ENCODE measurements at regions of chr17 and their contacts with region 1.

Region 1: GRCh38 chr17:40349920-40350909 is 14.3 kb downstream of the GJD3 start:
- DNase-seq: no peak
- H3K4me3 ChIP-seq: no peak overlapping the region
- H3K27ac ChIP-seq: no peak overlapping the region
- H3K4me1 ChIP-seq: peaks cover 0 to 60% (median 53%) of the 10 kb centered on the region in 4 donors
- H3K27me3 ChIP-seq: no peaks in the 10 kb centered on the region
- CTCF ChIP-seq: no peak

Region 2: DNA sequence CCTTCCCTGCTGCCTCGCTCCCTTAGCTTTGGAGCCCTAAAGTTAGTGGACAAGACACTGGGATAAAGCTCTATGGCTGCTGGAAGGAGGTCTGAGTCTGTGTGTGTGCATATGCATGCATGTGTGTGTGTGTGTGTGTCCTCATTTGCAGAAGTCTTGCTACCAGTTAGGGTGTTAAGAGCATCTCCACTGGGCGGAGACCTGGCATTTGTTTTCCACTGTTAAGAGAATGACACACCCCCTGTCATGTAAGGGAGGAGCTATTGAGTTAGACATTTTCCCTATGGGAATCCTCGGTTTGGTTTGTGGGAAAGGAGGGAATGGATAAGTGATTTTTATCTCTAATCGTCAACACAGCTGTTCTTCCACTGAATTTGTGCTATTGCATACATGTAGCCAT is 1946.7 kb before region 1 on chr17:
- intact Hi-C with region 1: no loop called
- DNase-seq: no peak
- H3K4me3 ChIP-seq: no peak overlapping the region
- H3K27ac ChIP-seq: no peak overlapping the region
- H3K4me1 ChIP-seq: no peaks in the 10 kb centered on the region
- H3K27me3 ChIP-seq: no peaks in the 10 kb centered on the region
- CTCF ChIP-seq: no peak

Region 3: DNA sequence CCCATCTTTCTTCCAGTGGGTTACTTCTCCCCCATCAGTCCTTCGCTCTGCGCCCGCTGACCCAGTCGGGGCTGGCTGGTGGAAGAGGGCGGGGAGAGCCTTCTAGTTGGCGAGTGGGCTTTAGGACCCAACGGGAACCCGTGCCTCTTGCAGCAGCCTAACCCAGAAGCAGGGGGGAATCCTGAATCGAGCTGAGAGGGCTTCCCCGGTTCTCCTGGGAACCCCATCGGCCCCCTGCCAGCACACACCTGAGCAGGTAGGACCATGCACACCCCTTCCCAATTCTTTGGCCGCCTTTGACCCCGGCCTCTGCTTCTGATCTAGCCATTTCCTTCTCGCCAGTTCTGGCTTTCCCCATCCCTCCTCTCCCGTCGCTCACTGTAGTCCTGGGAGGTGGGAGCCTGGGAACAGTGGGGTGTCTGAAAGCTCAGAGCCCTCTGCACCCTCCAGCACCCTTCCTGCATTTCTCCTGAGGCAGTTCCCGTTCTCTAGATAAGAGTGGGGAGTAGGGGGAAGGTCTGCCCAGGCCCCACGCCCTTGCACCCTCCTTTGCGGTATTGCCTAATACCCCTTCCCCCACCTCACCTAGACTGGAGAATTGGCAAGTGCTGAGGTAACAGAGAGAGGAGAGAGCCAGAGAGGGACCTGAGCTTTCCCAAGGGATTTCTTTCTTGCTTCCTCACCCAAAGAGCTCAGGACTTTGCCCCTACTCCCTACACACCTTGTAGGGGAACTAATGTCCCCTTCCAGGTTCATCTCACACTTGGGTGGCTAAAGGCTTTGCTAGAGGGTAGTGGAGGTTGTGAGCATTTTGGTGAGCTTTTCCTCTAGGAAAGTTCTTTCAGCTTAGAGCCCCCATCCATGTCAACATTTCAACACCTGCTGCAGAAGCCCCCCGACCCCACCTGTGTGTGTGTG is 40.9 kb before region 1 on chr17 and contains the start of gene RARA:
- intact Hi-C with region 1: loop called (anchors 2 kb)
- DNase-seq: peak in 1 of 2 donors; percentile 47
- H3K4me3 ChIP-seq: peak within 1 kb of the TSS; percentile 36 to 42
- H3K27ac ChIP-seq: peak within 1 kb of the TSS; percentile 94 to 95
- H3K4me1 ChIP-seq: peaks cover 0 to 85% (median 59%) of the 10 kb centered on the region in 4 donors
- H3K27me3 ChIP-seq: no peaks in the 10 kb centered on the region
- CTCF ChIP-seq: no peak

Region 4: DNA sequence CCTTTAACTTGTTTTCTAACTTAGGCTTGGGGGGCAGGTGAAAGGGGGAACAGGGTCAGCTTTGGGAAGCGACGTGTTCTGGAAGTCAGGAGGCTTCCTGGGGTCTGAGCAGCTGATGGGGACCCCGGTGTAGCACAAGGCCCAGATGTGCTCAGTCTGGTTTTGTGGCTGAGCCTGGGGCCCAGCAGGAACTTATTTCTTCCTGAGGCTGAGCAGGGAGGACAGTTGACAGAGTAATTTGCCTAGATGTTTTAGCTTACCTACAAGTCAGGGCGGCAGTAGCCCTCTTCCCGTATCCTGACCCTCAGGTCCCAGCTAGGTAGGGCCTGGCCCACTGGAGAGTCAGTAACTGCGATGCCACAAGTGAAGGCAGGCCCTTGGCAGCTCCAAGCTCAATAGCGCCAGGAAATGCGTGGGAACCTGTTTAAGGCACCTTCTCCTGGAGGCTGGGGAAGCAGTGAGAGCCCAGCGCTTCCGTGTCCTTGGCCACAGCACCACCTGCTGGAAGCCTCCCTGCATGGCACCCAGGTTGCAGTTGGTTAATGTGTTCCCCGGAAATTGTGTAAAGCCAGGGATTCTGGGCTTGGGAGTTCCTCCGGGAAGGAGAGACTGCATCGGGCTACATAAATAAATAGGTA is 209.9 kb after region 1 on chr17:
- intact Hi-C with region 1: no loop called
- DNase-seq: peak; percentile 92 to 94
- H3K4me3 ChIP-seq: no peak overlapping the region
- H3K27ac ChIP-seq: peak overlapping the region; percentile 25 to 49
- H3K4me1 ChIP-seq: peaks cover 0 to 31% (median 8%) of the 10 kb centered on the region in 4 donors
- H3K27me3 ChIP-seq: peaks cover 0 to 14% of the 10 kb centered on the region in 2 donors
- CTCF ChIP-seq: peak; percentile 96 to 98